HepG2 (cell line): ENCODE measurements at regions of chr2 and their contacts with region 1.

Region 1: GRCh38 chr2:127810619-127811396 is at the start of gene WDR33:
- DNase-seq: peak; percentile 94
- ATAC-seq: peak; percentile 98
- H3K4me3 ChIP-seq: peak within 1 kb of the TSS; percentile 83 to 96 (median 93)
- H3K27ac ChIP-seq: peak within 1 kb of the TSS; percentile 93
- H3K4me1 ChIP-seq: peaks cover 63% of the 10 kb centered on the region
- H3K27me3 ChIP-seq: no peaks in the 10 kb centered on the region; a peak in 1 of 5 replicates
- CTCF ChIP-seq: peak; percentile 70
- EP300 ChIP-seq: no peak
- POLR2A ChIP-seq: peak; percentile 99
- RAD21 ChIP-seq: peak; percentile 90
- total RNA-seq, gene WDR33: 78.2 and 125 TPM in 2 replicates

Region 2: GRCh38 chr2:127701193-127701650 is 109.6 kb before region 1 on chr2 and contains the start of gene SFT2D3:
- CTCF ChIA-PET with region 1: no interaction called
- POLR2A ChIA-PET with region 1: interaction called, 15 read pairs
- in situ Hi-C with region 1: no loop called
- intact Hi-C with region 1: loop called (anchors 2 kb)
- DNase-seq: peak; percentile 91
- ATAC-seq: peak; percentile 90
- H3K4me3 ChIP-seq: peak within 1 kb of the TSS; percentile 75 to 92 (median 79)
- H3K27ac ChIP-seq: peak within 1 kb of the TSS; percentile 93
- H3K4me1 ChIP-seq: peaks cover 25% of the 10 kb centered on the region
- H3K27me3 ChIP-seq: no peaks in the 10 kb centered on the region
- CTCF ChIP-seq: peak; percentile 34; the same call in 1 of the 2 replicates
- EP300 ChIP-seq: no peak; a peak in 1 of 4 replicates
- POLR2A ChIP-seq: peak in 1 of 2 experiments; percentile 98; a peak in 2 of 4 replicates
- RAD21 ChIP-seq: peak; percentile 28; the same call in 1 of the 2 replicates
- total RNA-seq, gene SFT2D3: 4.6 and 9.4 TPM in 2 replicates

Region 3: GRCh38 chr2:127768775-127769479 is 41.9 kb before region 1 on chr2:
- CTCF ChIA-PET with region 1: no interaction called
- POLR2A ChIA-PET with region 1: no interaction called
- in situ Hi-C with region 1: no loop called
- intact Hi-C with region 1: loop called (anchors 5 kb)
- DNase-seq: no peak
- ATAC-seq: no peak
- H3K4me3 ChIP-seq: no peak overlapping the region
- H3K27ac ChIP-seq: no peak overlapping the region
- H3K4me1 ChIP-seq: peaks cover 13% of the 10 kb centered on the region
- H3K27me3 ChIP-seq: no peaks in the 10 kb centered on the region
- CTCF ChIP-seq: no peak
- EP300 ChIP-seq: no peak
- POLR2A ChIP-seq: no peak
- RAD21 ChIP-seq: no peak

Region 4: DNA sequence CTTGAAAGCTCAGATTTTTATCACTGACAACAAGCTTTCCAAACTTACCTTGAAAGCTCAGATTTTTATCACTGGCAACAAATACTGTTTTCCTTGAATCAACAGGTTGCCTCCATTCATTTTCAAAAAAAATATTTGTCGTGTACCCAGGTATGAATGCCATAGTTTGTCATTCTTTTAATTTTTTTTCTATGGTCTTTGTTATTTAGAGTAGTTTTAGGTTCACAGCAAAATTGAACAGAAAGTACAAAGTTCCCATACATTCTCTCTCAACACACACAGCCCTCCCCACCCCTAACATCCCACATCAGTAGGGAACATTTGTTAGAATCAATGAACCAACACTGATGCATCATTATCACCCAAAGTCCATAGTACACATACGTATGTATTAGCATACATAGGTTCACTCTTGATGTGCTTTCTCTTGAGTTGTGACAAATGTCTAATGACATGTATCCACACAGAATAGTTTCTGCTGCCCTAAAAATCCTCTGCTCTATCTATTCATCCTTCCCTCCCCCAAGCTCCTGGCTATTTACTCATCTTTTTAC is 25.8 kb before region 1 on chr2:
- CTCF ChIA-PET with region 1: no interaction called
- POLR2A ChIA-PET with region 1: interaction called, 13 read pairs
- in situ Hi-C with region 1: no loop called
- intact Hi-C with region 1: loop called (anchors 2 kb)
- DNase-seq: peak; percentile 96
- ATAC-seq: peak; percentile 99
- H3K4me3 ChIP-seq: peak overlapping the region in 1 of 3 experiments; percentile 25; a peak in 1 of 6 replicates
- H3K27ac ChIP-seq: peak overlapping the region; percentile 73
- H3K4me1 ChIP-seq: peaks cover 41% of the 10 kb centered on the region
- H3K27me3 ChIP-seq: no peaks in the 10 kb centered on the region
- CTCF ChIP-seq: no peak
- EP300 ChIP-seq: peak in 1 of 2 experiments; percentile 82; a peak in 2 of 4 replicates
- POLR2A ChIP-seq: no peak
- RAD21 ChIP-seq: no peak

Region 5: GRCh38 chr2:127857265-127857808 is 46.5 kb after region 1 on chr2:
- CTCF ChIA-PET with region 1: no interaction called
- POLR2A ChIA-PET with region 1: interaction called, 3 read pairs
- in situ Hi-C with region 1: no loop called
- intact Hi-C with region 1: loop called (anchors 1 kb)
- DNase-seq: no peak
- ATAC-seq: peak; percentile 13
- H3K4me3 ChIP-seq: peak overlapping the region; percentile 97 to 99 (median 97)
- H3K27ac ChIP-seq: peak overlapping the region; percentile 89
- H3K4me1 ChIP-seq: peaks cover 56% of the 10 kb centered on the region
- H3K27me3 ChIP-seq: no peaks in the 10 kb centered on the region; a peak in 1 of 5 replicates
- CTCF ChIP-seq: no peak
- EP300 ChIP-seq: no peak; a peak in 1 of 4 replicates
- POLR2A ChIP-seq: no peak
- RAD21 ChIP-seq: no peak